ENCODE measurements at regions of chr4 and their contacts with region 1.

Region 1: GRCh38 chr4:113684534-113685091 is 76.9 kb downstream of the CAMK2D start:
- DNase-seq: peak in 1 of 9 donors; percentile 28
- ATAC-seq: no peak
- H3K4me3 ChIP-seq: no peak overlapping the region
- H3K4me3 Mint-ChIP-seq: peak overlapping the region in 7 of 10 donors; percentile 3 to 83 (median 73)
- H3K27ac ChIP-seq: peak overlapping the region; percentile 50
- H3K27ac Mint-ChIP-seq: peak overlapping the region; percentile 81 to 93 (median 90)
- H3K4me1 ChIP-seq: peaks cover 27 to 30% of the 10 kb centered on the region in 2 donors
- H3K4me1 Mint-ChIP-seq: peaks cover 20 to 66% (median 62%) of the 10 kb centered on the region in 7 donors
- H3K27me3 ChIP-seq: no peaks in the 10 kb centered on the region
- H3K27me3 Mint-ChIP-seq: no peaks in the 10 kb centered on the region

Region 2: DNA sequence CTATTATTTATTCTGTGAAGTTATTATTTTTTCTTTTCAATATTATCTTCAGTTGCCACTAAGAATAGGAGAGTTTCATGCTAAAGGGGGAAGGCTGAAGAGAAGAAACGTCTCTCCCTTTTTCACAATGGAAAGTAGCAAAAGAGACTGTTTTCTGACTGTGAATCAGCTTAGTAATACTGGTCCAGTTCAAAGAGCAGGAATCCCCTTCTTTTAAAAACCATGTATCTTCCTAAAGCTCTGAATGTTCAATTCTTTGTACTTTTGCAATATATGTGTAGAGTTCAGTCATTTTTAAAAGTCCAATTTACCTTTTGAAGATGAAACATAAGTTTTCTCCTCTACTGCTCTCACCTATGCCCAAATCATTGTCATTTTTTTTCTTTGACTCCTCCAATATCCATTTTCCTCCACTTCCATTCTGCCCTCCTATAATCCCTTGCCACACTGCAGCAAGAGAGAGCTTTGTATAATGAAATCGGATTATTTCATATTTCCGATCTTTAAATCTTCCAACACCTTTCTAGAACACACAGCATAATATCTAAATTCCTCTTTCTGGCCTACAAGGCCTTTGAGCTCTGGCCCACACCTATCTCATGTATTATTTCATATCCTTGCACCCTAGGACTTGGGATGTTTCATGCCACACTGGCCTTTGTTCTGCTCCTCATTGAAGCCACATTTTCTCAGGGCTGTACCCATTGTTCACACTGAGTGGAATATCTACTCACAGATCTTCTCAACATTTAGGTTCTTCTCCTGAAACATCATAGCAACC is 118.4 kb before region 1 on chr4:
- CTCF ChIA-PET with region 1: no interaction called
- POLR2A ChIA-PET with region 1: interaction called, 5 read pairs
- intact Hi-C with region 1: loop called in 1 of 2 experiments (anchors 1 kb)
- DNase-seq: no peak
- ATAC-seq: no peak
- H3K4me3 ChIP-seq: no peak overlapping the region
- H3K4me3 Mint-ChIP-seq: peak overlapping the region in 6 of 10 donors; percentile 3 to 31 (median 14)
- H3K27ac ChIP-seq: no peak overlapping the region
- H3K27ac Mint-ChIP-seq: peak overlapping the region in 6 of 9 donors; percentile 1 to 49 (median 15)
- H3K4me1 ChIP-seq: peaks cover 18 to 22% of the 10 kb centered on the region in 2 donors
- H3K4me1 Mint-ChIP-seq: peaks cover 29 to 66% (median 49%) of the 10 kb centered on the region in 7 donors
- H3K27me3 ChIP-seq: no peaks in the 10 kb centered on the region
- H3K27me3 Mint-ChIP-seq: no peaks in the 10 kb centered on the region

Region 3: DNA sequence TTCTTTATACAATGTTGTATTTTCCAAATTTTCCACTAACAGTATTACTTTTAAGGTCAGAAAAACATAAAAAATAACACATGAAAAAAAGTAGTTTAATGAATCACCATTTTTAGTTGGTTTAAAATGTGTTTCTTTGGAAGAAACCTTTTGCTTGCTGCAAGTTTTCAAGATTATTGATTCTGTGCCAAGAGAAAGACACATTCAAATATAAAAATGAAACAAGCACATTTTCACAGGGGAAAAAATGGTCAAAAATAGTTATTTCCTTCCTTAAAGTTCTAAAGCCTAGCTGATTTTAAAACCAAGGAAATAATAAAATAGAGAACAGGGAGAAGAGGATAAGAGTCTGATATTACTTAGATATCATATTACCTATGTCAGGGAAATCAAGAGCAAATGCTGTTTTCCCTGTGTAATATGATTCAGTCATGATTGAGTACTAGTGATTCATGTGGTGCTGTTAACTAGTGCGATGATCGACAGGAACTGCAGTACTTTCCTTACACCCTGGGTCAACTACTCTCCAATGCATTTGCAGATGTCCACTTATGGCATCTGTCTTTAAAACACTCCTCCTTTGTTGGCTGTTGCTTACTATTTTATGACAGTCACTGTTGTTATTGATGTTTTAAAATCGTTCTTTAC is 26.9 kb before region 1 on chr4:
- CTCF ChIA-PET with region 1: no interaction called
- POLR2A ChIA-PET with region 1: no interaction called
- intact Hi-C with region 1: no loop called
- DNase-seq: no peak
- ATAC-seq: no peak
- H3K4me3 ChIP-seq: no peak overlapping the region
- H3K4me3 Mint-ChIP-seq: no peak overlapping the region
- H3K27ac ChIP-seq: no peak overlapping the region
- H3K27ac Mint-ChIP-seq: no peak overlapping the region
- H3K4me1 ChIP-seq: peaks cover 0 to 4% of the 10 kb centered on the region in 2 donors
- H3K4me1 Mint-ChIP-seq: peaks cover 13 to 51% (median 40%) of the 10 kb centered on the region in 7 donors
- H3K27me3 ChIP-seq: no peaks in the 10 kb centered on the region
- H3K27me3 Mint-ChIP-seq: no peaks in the 10 kb centered on the region

Region 4: DNA sequence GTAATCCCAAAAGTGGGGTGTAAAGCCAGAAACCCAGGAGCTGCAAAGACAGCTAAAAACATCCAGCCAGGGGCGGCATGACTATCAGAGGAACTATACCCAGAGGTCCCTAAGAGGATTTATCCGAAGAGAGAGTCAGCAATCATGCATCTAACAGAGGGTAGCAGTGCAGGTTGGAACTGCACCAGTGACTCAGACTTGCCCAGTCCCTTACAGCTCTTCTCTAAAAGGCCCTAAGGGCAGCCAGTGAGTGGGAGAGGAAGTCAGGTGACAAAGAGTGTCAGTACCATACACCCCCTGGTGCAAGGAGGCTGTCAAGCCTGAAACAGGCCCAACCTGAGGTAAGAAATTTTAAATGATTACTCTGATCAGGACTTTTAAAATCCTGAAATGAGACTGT is 11.2 kb before region 1 on chr4:
- CTCF ChIA-PET with region 1: interaction called, 3 read pairs
- POLR2A ChIA-PET with region 1: interaction called, 6 read pairs
- intact Hi-C with region 1: loop called in 1 of 2 experiments (anchors 1 kb)
- DNase-seq: peak in 1 of 9 donors; percentile 42
- ATAC-seq: peak; percentile 68
- H3K4me3 ChIP-seq: no peak overlapping the region
- H3K4me3 Mint-ChIP-seq: peak overlapping the region in 5 of 10 donors; percentile 11 to 41 (median 34)
- H3K27ac ChIP-seq: no peak overlapping the region
- H3K27ac Mint-ChIP-seq: peak overlapping the region in 3 of 9 donors; percentile 30 to 67 (median 43)
- H3K4me1 ChIP-seq: peaks cover 15 to 21% of the 10 kb centered on the region in 2 donors
- H3K4me1 Mint-ChIP-seq: peaks cover 29 to 68% (median 55%) of the 10 kb centered on the region in 7 donors
- H3K27me3 ChIP-seq: no peaks in the 10 kb centered on the region
- H3K27me3 Mint-ChIP-seq: no peaks in the 10 kb centered on the region

Region 5: DNA sequence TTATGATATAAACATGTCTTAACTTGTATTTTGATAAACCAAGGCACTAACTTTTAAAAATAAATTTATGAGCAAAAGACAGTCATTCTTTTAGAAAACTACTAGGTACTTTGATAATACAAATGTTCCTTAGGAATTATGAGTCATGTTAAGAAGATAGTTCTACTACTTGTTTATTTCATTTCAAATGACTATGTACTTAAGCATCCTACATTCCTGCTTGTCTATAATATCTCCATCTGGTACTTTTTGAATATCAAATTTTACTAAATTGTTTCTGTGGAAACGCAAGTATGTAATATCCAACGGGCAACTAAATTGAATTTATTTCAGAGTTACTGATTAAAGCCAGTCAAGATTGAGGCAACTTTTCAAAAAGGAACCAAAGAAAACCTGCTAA is 15.2 kb after region 1 on chr4:
- CTCF ChIA-PET with region 1: interaction called, 3 read pairs
- POLR2A ChIA-PET with region 1: no interaction called
- intact Hi-C with region 1: loop called in 1 of 2 experiments (anchors 2 kb)
- DNase-seq: no peak
- ATAC-seq: no peak
- H3K4me3 ChIP-seq: no peak overlapping the region
- H3K4me3 Mint-ChIP-seq: no peak overlapping the region
- H3K27ac ChIP-seq: no peak overlapping the region
- H3K27ac Mint-ChIP-seq: peak overlapping the region in 2 of 9 donors; percentile 36 to 53
- H3K4me1 ChIP-seq: no peaks in the 10 kb centered on the region
- H3K4me1 Mint-ChIP-seq: peaks cover 6 to 38% (median 19%) of the 10 kb centered on the region in 7 donors
- H3K27me3 ChIP-seq: no peaks in the 10 kb centered on the region
- H3K27me3 Mint-ChIP-seq: no peaks in the 10 kb centered on the region

Region 6: DNA sequence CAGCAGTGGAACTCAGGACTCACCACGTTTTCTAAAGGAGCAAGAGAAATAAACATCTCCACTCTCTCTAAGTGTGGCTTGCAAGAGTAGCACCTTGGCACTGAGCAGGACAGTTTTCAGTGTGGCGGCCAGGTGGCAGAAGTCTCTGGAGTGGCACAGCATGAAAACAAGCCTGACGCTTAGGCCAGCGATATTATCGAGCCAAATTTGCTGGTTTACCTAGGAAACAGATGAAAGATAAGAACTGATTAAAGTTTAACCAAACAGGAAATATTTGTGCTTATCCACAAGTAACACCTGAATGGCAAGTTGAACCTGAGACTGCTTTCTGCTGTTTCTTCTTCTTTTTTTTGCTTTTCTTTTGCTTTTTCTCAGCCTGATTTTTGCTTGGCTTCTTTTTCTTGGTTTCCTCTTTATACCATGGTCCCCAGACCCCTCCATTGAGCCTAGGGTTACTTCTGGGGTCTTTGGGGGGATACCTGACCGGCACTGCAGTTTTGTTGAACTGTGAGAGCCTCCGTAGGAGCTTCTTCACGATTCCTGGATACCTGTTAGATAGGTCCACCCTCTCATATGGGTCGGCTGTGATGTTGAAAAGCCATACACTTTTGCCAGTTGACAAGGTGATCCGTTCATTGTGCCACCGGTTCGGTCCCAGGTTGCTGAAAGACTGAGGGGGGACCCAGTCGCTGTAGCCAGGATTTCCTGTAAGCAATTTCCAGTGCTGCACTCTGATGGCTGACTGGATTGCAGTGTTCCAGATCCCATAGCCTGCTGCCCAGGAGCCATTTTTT is 217.6 kb after region 1 on chr4:
- CTCF ChIA-PET with region 1: no interaction called
- POLR2A ChIA-PET with region 1: no interaction called
- intact Hi-C with region 1: loop called in 1 of 2 experiments (anchors 5 kb)
- DNase-seq: peak; percentile 27 to 86 (median 72)
- ATAC-seq: peak; percentile 88
- H3K4me3 ChIP-seq: peak overlapping the region; percentile 7
- H3K4me3 Mint-ChIP-seq: peak overlapping the region; percentile 32 to 78 (median 70)
- H3K27ac ChIP-seq: peak overlapping the region; percentile 65
- H3K27ac Mint-ChIP-seq: peak overlapping the region; percentile 74 to 99 (median 96)
- H3K4me1 ChIP-seq: peaks cover 65 to 72% of the 10 kb centered on the region in 2 donors
- H3K4me1 Mint-ChIP-seq: peaks cover 23 to 87% (median 82%) of the 10 kb centered on the region in 7 donors
- H3K27me3 ChIP-seq: no peaks in the 10 kb centered on the region
- H3K27me3 Mint-ChIP-seq: no peaks in the 10 kb centered on the region

Measured in naive thymus-derived CD4-positive, alpha-beta T cell (primary cell).